ENCODE measurements at regions of chr12 and their contacts with region 1.

Region 1: GRCh38 chr12:5022465-5023061 is 21.1 kb upstream of the KCNA5 start:
- DNase-seq: no peak
- ATAC-seq: peak; percentile 49 to 54
- H3K4me3 ChIP-seq: no peak overlapping the region
- H3K27ac ChIP-seq: no peak overlapping the region
- H3K4me1 ChIP-seq: peaks cover 3 to 7% of the 10 kb centered on the region in 2 donors
- H3K27me3 ChIP-seq: no peaks in the 10 kb centered on the region
- CTCF ChIP-seq: peak; percentile 70 to 93 (median 83)
- POLR2A ChIP-seq: no peak

Region 2: DNA sequence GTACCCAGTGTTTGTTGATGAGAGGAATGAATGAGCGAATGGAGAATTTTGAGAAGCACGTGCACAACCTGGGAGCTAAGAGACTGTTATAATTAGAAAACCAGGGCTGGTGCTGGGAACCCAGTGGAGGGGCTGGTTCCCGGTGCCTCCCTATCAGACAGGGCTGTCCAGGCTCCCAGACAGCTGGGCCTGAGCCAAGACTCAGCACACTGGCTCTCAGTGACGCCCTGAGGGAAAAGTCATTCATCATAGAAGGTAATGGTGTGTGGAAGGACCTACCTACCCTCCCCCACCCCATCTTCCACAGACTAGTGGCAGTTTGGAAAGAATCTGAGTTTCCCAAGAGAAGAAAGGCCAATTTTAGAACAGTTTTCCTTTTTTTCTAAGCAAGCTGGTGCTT is 55.9 kb after region 1 on chr12:
- in situ Hi-C with region 1: loop called in 2 of 4 experiments (anchors 5 to 10 kb)
- intact Hi-C with region 1: no loop called
- DNase-seq: no peak
- ATAC-seq: no peak
- H3K4me3 ChIP-seq: no peak overlapping the region
- H3K27ac ChIP-seq: no peak overlapping the region
- H3K4me1 ChIP-seq: no peaks in the 10 kb centered on the region
- H3K27me3 ChIP-seq: no peaks in the 10 kb centered on the region
- CTCF ChIP-seq: no peak
- POLR2A ChIP-seq: no peak

Region 3: DNA sequence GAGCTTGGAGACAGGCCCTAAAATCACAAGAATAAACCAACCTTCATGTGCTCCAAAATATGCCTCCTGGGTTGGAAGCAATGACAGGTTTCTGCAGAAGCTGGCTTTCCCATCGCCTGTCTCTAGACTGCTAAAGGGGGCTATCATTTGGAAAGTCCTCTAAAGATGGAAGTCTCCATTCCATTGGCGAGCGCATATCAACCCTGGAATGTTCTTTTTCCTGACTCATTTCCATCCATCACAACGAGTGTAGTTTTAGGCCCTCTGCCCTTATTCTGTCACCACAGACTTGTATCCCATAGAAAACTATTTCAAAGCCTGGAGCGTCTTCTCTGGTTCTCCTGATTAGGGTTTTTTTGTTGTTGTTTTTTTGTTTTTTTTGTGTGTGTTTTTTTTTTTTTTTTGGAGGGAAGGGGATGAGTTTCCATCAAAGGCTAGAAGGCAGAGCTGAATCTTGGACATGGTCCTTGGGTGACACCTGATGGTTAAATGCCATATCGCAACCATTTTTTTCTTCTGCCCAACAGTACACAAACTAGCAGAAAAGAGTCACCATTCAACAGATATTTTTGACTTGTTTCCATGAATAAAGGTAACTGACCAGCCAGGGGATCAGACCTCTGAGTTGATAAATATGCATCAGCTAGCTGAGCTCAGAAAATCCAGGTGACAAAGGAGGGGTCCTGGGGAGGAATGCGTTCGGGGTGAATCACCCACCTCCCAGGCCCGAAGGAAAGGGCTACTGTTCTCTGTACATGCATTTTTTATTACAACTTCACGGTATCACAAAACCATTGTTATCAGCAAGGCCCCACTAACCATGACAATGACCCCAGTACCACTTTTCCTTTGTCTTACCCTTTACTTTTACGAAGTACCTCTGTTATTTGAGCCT is 61.6 kb after region 1 on chr12:
- in situ Hi-C with region 1: loop called (anchors 5 to 10 kb)
- intact Hi-C with region 1: loop called (anchors 1 kb)
- DNase-seq: no peak
- ATAC-seq: peak; percentile 56 to 64
- H3K4me3 ChIP-seq: no peak overlapping the region
- H3K27ac ChIP-seq: no peak overlapping the region
- H3K4me1 ChIP-seq: no peaks in the 10 kb centered on the region
- H3K27me3 ChIP-seq: no peaks in the 10 kb centered on the region
- CTCF ChIP-seq: peak; percentile 27 to 75 (median 53)
- POLR2A ChIP-seq: no peak

Region 4: DNA sequence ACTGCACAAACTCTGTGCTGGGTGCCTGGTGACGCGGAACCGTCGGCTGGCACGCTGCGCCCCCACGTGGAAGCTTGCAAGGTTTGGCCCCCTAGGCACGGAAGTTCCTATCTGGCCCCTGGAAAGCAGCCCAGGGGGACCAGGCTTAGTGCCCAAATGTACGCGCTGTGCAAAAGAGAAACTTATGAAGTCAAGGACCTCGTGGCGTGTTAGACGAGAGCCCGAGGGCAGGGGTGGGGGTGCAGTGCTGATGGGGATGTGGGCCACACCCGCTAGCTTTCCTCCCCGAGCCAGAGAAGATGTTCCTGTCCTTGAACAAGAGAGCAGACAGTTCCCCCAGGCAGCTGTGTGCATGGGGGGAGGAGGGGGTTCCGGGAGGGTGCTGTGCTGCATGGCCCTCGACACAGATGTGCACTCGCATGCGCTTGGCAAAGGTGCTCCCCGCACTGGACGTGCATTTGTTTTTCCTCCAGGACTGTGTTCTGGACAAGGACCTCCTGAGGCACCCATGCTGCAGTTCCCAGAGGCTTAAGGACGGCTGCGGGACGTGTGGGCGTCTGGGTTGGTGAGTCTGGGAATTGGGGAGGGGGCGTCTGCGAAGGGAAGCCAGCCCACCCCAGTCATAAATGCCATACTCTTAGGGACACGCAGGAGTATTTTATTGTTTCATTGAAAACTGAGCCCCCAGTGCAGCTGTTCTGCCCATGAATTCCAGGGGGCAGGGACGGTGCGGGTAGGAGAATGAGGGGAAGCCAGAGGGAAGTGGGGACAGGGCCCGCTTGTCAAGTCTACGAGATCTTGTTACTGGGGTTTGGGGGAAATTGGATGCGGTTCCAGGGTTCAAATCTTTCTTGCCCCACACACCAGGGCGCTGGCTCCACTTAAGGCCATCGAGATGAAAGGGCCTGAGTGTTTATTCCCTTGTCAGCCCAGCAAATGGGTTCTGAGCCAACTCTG is 489.4 kb after region 1 on chr12:
- in situ Hi-C with region 1: no loop called
- intact Hi-C with region 1: no loop called
- DNase-seq: no peak
- ATAC-seq: no peak
- H3K4me3 ChIP-seq: peak overlapping the region in 2 of 4 donors; percentile 24 to 27
- H3K27ac ChIP-seq: no peak overlapping the region
- H3K4me1 ChIP-seq: peaks cover 0 to 6% of the 10 kb centered on the region in 2 donors
- H3K27me3 ChIP-seq: peaks cover 0 to 7% (median 4%) of the 10 kb centered on the region in 3 donors
- CTCF ChIP-seq: peak in 2 of 5 experiments; percentile 21 to 43
- POLR2A ChIP-seq: no peak

Measured in gastrocnemius medialis (tissue), 4 donors.